Caco-2 (cell line): ENCODE measurements at regions of chr3 and their contacts with region 1.

Region 1: DNA sequence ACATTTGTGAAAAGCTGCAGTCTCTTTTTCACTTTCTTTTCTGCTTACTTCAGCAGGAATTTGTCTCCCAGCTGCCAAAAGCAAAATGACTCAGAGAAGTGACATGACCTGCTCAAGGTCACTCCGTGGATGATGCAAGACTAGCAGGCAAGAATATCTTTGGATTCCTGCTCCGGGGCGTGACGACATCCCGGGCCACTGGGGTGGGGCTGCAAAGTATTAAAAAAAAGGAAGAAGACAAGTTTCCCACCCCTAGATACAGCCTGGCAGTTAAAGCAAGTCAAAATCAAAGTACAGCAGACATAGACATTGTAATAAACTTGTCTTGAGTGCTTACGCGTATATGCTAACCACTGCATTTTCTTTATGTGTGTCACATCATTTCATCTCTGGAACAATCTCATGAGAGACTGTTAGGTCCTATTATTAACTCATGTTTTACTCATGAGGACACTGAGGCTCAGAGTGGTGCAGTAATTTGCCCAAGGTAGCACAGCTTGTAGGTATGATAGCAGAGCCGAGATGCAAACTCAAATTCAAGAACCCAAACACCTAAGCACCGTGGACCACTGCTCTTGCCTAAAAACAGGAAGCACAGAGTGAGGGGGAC is 485.2 kb upstream of the PROK2 start:
- DNase-seq: peak; percentile 62 to 66
- H3K4me3 ChIP-seq: no peak overlapping the region
- H3K4me3 Mint-ChIP-seq: no peak overlapping the region
- H3K27ac Mint-ChIP-seq: peak overlapping the region; percentile 69
- H3K4me1 ChIP-seq: peaks cover 14% of the 10 kb centered on the region
- H3K4me1 Mint-ChIP-seq: peaks cover 19% of the 10 kb centered on the region
- H3K27me3 ChIP-seq: no peaks in the 10 kb centered on the region
- H3K27me3 Mint-ChIP-seq: no peaks in the 10 kb centered on the region
- CTCF ChIP-seq: no peak

Region 2: GRCh38 chr3:71831599-71831998 is 438.6 kb before region 1 on chr3:
- CTCF ChIA-PET with region 1: no interaction called
- POLR2A ChIA-PET with region 1: no interaction called
- intact Hi-C with region 1: no loop called
- DNase-seq: no peak
- H3K4me3 ChIP-seq: no peak overlapping the region
- H3K4me3 Mint-ChIP-seq: no peak overlapping the region
- H3K27ac Mint-ChIP-seq: no peak overlapping the region
- H3K4me1 ChIP-seq: no peaks in the 10 kb centered on the region
- H3K4me1 Mint-ChIP-seq: no peaks in the 10 kb centered on the region
- H3K27me3 ChIP-seq: peaks cover 1% of the 10 kb centered on the region; the same call in 1 of the 2 replicates
- H3K27me3 Mint-ChIP-seq: peaks cover 8% of the 10 kb centered on the region
- CTCF ChIP-seq: no peak

Region 3: GRCh38 chr3:71955240-71956068 is 314.7 kb before region 1 on chr3:
- CTCF ChIA-PET with region 1: no interaction called
- POLR2A ChIA-PET with region 1: no interaction called
- intact Hi-C with region 1: loop called (anchors 1 kb)
- DNase-seq: peak; percentile 45 to 49
- H3K4me3 ChIP-seq: no peak overlapping the region
- H3K4me3 Mint-ChIP-seq: no peak overlapping the region
- H3K27ac Mint-ChIP-seq: no peak overlapping the region
- H3K4me1 ChIP-seq: no peaks in the 10 kb centered on the region
- H3K4me1 Mint-ChIP-seq: no peaks in the 10 kb centered on the region
- H3K27me3 ChIP-seq: no peaks in the 10 kb centered on the region
- H3K27me3 Mint-ChIP-seq: peaks cover 12% of the 10 kb centered on the region
- CTCF ChIP-seq: peak; percentile 64 to 84

Region 4: GRCh38 chr3:72310419-72311380 is 40.5 kb after region 1 on chr3:
- CTCF ChIA-PET with region 1: no interaction called
- POLR2A ChIA-PET with region 1: no interaction called
- intact Hi-C with region 1: no loop called
- DNase-seq: no peak
- H3K4me3 ChIP-seq: no peak overlapping the region
- H3K4me3 Mint-ChIP-seq: no peak overlapping the region
- H3K27ac Mint-ChIP-seq: no peak overlapping the region
- H3K4me1 ChIP-seq: no peaks in the 10 kb centered on the region
- H3K4me1 Mint-ChIP-seq: no peaks in the 10 kb centered on the region
- H3K27me3 ChIP-seq: no peaks in the 10 kb centered on the region
- H3K27me3 Mint-ChIP-seq: no peaks in the 10 kb centered on the region
- CTCF ChIP-seq: no peak